ENCODE measurements at regions of chr17 and their contacts with region 1.

Region 1: GRCh38 chr17:64515419-64515818 is 8.6 kb downstream of the CEP95 start:
- DNase-seq: no peak
- H3K4me3 ChIP-seq: no peak overlapping the region
- H3K27ac ChIP-seq: no peak overlapping the region
- H3K4me1 ChIP-seq: peaks cover 0 to 24% (median 0%) of the 10 kb centered on the region in 6 donors
- H3K27me3 ChIP-seq: no peaks in the 10 kb centered on the region
- CTCF ChIP-seq: no peak
- POLR2A ChIP-seq: no peak

Region 2: GRCh38 chr17:64658931-64659330 is 143.5 kb after region 1 on chr17:
- intact Hi-C with region 1: loop called (anchors 10 kb)
- DNase-seq: no peak
- H3K4me3 ChIP-seq: no peak overlapping the region
- H3K27ac ChIP-seq: peak overlapping the region in 1 of 8 donors; percentile 3
- H3K4me1 ChIP-seq: peaks cover 25 to 71% (median 48%) of the 10 kb centered on the region in 6 donors
- H3K27me3 ChIP-seq: no peaks in the 10 kb centered on the region
- CTCF ChIP-seq: no peak
- POLR2A ChIP-seq: no peak

Measured in spleen (tissue), 13 donors.